Dorsolateral prefrontal cortex (tissue), 120 donors: ENCODE measurements at regions of chr5 and their contacts with region 1.

Region 1: DNA sequence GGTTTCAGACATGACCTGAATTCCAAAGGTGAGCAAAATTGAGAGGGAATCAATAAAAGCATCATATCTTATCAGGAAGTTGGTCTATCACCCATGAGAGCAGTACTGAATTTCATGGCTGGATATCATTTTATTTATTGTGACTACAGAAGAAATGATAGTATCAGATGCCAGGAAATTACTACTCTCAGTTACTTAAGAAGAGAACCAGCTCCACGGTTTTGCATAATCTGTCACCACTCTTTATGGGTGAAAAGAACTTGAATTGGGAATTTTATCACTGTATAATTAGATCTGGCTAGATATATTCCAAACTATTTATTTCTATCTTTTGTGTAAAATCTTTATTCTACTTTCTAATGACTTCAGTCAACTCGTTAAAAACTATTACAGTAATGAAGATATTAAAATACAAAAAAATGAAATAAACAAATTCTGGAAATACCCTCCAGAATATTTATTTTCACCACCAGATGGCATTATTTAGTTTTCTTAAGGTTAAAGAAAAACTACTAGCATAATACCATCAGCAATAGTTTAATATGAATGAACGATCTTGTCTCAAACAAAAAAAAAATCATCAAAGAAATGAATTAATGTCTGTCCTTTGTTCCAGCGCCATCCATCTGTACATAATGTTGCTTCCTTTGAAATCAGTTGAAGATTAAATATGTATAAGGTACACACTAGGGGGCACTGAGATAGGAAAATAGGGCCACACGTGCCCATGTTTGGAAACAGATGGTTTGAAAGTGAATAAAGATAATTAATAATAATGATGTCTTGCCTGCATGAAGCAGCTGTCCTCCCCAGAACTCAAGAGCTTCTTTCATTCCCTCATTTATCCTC is 84.7 kb upstream of the SLCO6A1 start:
- DNase-seq: no peak
- H3K4me3 ChIP-seq: peak overlapping the region in 3 of 59 donors; percentile 5 to 19 (median 9)
- H3K27ac ChIP-seq: no peak overlapping the region
- H3K27me3 ChIP-seq: no peaks in the 10 kb centered on the region
- CTCF ChIP-seq: peak; percentile 38 to 80 (median 60)

Region 2: DNA sequence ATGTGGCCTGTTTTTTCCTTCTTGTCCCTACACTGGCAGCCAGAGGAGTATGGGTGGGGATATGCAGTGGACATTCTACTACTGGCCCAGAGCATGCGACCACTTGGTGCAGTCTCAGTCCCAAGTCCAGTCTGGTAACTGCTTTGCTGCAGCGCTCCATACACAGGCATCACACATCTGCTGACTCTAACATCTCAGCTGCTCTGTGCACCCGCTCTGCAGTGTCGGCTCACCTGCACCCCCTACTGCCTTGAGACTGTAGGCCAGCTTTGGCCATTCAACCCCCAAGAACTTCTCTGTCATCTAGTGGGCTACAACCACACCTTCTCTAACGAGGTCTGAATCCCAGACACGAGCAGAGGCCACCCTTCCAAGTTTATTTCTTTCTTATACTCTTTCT is 38.3 kb before region 1 on chr5:
- intact Hi-C with region 1: no loop called
- DNase-seq: no peak
- H3K4me3 ChIP-seq: no peak overlapping the region
- H3K27ac ChIP-seq: no peak overlapping the region
- H3K27me3 ChIP-seq: no peaks in the 10 kb centered on the region
- CTCF ChIP-seq: no peak

Region 3: GRCh38 chr5:102792705-102793104 is 209.2 kb after region 1 on chr5:
- intact Hi-C with region 1: no loop called
- DNase-seq: no peak
- H3K4me3 ChIP-seq: no peak overlapping the region
- H3K27ac ChIP-seq: no peak overlapping the region
- H3K27me3 ChIP-seq: no peaks in the 10 kb centered on the region
- CTCF ChIP-seq: peak in 11 of 56 donors; percentile 11 to 35 (median 17)

Region 4: GRCh38 chr5:103041071-103041676 is 457.7 kb after region 1 on chr5:
- intact Hi-C with region 1: loop called in 1 of 2 experiments (anchors 5 kb)
- DNase-seq: no peak
- H3K4me3 ChIP-seq: no peak overlapping the region
- H3K27ac ChIP-seq: no peak overlapping the region
- H3K27me3 ChIP-seq: no peaks in the 10 kb centered on the region
- CTCF ChIP-seq: peak; percentile 22 to 86 (median 59)

Region 5: GRCh38 chr5:103139264-103139865 is 555.9 kb after region 1 on chr5:
- intact Hi-C with region 1: loop called in 1 of 2 experiments (anchors 5 kb)
- DNase-seq: peak; percentile 57 to 84 (median 65)
- H3K4me3 ChIP-seq: no peak overlapping the region
- H3K27ac ChIP-seq: no peak overlapping the region
- H3K27me3 ChIP-seq: no peaks in the 10 kb centered on the region
- CTCF ChIP-seq: peak; percentile 72 to 95 (median 88)